Aorta (tissue), 5 donors: ENCODE measurements at regions of chr1 and their contacts with region 1.

Region 1: DNA sequence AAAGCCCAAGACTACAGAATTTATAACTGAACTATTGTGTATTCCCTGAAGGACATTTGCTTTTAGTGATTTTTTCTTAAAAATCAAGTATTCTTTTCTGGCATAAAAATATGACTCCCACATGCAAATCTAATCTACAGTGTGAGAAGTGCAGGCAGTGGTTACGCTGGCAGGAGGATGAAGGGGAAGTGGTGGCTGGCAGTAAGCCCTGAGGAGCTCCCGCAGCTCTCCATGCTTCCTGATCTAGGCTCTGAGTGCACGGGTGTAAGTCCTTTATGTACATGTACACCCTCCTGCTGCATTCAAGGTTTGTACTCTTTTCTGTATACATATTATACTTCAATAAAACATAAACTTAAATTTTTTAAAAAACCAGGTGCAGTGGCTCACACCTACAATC is 67.5 kb upstream of the PRDX6 start:
- DNase-seq: peak in 1 of 2 donors; percentile 81
- ATAC-seq: no peak
- H3K4me3 ChIP-seq: no peak overlapping the region
- H3K27ac ChIP-seq: no peak overlapping the region
- H3K4me1 ChIP-seq: peaks cover 0 to 2% of the 10 kb centered on the region in 2 donors
- H3K27me3 ChIP-seq: no peaks in the 10 kb centered on the region

Region 2: DNA sequence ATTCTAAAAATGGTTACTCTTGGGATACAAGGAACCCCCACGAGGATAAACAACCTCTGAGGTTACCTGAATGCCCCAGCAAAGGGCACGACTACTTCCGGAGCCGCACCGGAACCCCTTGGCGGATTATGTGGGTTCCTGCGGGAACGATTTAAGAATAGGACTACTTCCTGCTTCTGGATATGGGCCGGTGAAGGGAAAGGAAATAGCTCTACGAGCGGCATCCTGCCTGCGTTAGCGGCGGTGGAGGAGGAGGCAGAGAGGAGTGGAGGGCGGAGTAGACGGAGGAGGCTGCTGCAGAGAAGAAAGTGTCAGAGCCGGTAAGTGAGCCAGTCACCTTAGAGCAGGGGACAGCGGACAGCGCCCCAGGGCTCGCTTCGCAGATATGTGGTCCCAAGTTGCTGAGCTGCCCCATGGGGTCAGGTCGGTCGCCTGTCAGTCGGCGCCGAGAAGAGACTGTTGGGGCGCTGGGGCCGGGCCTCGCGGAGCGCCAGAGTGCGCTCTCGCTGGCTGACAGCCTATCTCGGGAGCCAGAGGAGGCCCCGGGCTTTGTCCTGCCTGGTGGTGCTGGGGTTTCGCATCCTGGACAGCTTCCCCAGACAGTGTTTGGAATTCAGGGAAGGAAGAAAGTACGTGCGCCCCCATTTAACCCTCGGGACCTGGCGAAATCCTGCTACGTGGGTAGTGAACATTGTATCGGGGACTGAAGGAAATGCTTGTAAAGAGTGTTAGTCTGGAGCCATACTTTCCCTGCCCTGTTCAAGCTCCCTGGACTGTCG is 305.3 kb after region 1 on chr1 and contains the start of gene KLHL20:
- intact Hi-C with region 1: loop called in 1 of 2 experiments (anchors 10 kb)
- DNase-seq: peak; percentile 87 to 91
- ATAC-seq: peak; percentile 97
- H3K4me3 ChIP-seq: peak within 1 kb of the TSS; percentile 49 to 81
- H3K27ac ChIP-seq: peak within 1 kb of the TSS; percentile 61 to 88
- H3K4me1 ChIP-seq: no peaks in the 10 kb centered on the region
- H3K27me3 ChIP-seq: no peaks in the 10 kb centered on the region
- total RNA-seq, gene KLHL20: 28.5 to 35.2 TPM